ENCODE measurements at regions of chr11 and their contacts with region 1.

Region 1: GRCh38 chr11:96464700-96465307 is 75.0 kb downstream of the JRKL start:
- DNase-seq: peak; percentile 15 to 82
- H3K4me3 ChIP-seq: no peak overlapping the region
- H3K4me1 ChIP-seq: no peaks in the 10 kb centered on the region
- H3K27me3 ChIP-seq: peaks cover 2% of the 10 kb centered on the region; the same call in 1 of the 2 replicates

Region 2: GRCh38 chr11:96242971-96243647 is 221.7 kb before region 1 on chr11:
- in situ Hi-C with region 1: no loop called
- DNase-seq: peak; percentile 96 to 97
- H3K4me3 ChIP-seq: peak overlapping the region; percentile 18
- H3K4me1 ChIP-seq: peaks cover 45% of the 10 kb centered on the region
- H3K27me3 ChIP-seq: no peaks in the 10 kb centered on the region

Region 3: GRCh38 chr11:96524475-96524874 is 59.7 kb after region 1 on chr11:
- in situ Hi-C with region 1: no loop called
- DNase-seq: no peak
- H3K4me3 ChIP-seq: no peak overlapping the region
- H3K4me1 ChIP-seq: no peaks in the 10 kb centered on the region
- H3K27me3 ChIP-seq: peaks cover 5% of the 10 kb centered on the region; the same call in 1 of the 2 replicates

Region 4: DNA sequence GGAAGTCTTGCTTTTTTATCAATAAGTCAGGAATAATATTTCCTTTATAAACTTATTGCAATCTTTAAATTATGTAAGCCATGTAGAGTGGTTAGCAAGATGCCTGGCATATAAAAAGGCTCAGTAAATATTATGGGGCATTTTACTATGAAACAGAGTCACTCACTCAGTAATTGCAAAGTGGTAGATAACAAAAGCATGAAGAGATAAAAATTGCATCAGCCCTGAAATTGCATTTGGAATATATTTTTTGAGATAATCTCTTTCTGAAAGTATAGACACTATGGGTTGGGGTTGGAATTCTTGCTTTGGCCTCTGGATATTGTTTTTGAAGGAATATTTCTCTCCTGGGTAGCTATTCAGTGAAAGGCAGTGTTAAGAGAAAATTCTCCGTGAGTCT is 113.6 kb after region 1 on chr11:
- in situ Hi-C with region 1: no loop called
- DNase-seq: no peak
- H3K4me3 ChIP-seq: no peak overlapping the region
- H3K4me1 ChIP-seq: no peaks in the 10 kb centered on the region
- H3K27me3 ChIP-seq: peaks cover 11% of the 10 kb centered on the region; the same call in 1 of the 2 replicates

Region 5: GRCh38 chr11:97140885-97141494 is 676.2 kb after region 1 on chr11:
- in situ Hi-C with region 1: loop called (anchors 25 kb)
- DNase-seq: peak; percentile 7 to 19
- H3K4me3 ChIP-seq: no peak overlapping the region
- H3K4me1 ChIP-seq: no peaks in the 10 kb centered on the region
- H3K27me3 ChIP-seq: no peaks in the 10 kb centered on the region